ENCODE measurements at regions of chr4 and their contacts with region 1.

Region 1: GRCh38 chr4:108053251-108053711 is 63.6 kb downstream of the HADH start:
- DNase-seq: no peak
- H3K4me3 ChIP-seq: no peak overlapping the region
- H3K4me3 Mint-ChIP-seq: peak overlapping the region in 2 of 8 donors; percentile 0 to 55
- H3K27ac ChIP-seq: no peak overlapping the region
- H3K27ac Mint-ChIP-seq: peak overlapping the region; percentile 64 to 95 (median 75)
- H3K4me1 ChIP-seq: peaks cover 75% of the 10 kb centered on the region
- H3K4me1 Mint-ChIP-seq: peaks cover 40 to 76% (median 64%) of the 10 kb centered on the region in 4 donors
- H3K27me3 ChIP-seq: no peaks in the 10 kb centered on the region
- H3K27me3 Mint-ChIP-seq: no peaks in the 10 kb centered on the region

Region 2: DNA sequence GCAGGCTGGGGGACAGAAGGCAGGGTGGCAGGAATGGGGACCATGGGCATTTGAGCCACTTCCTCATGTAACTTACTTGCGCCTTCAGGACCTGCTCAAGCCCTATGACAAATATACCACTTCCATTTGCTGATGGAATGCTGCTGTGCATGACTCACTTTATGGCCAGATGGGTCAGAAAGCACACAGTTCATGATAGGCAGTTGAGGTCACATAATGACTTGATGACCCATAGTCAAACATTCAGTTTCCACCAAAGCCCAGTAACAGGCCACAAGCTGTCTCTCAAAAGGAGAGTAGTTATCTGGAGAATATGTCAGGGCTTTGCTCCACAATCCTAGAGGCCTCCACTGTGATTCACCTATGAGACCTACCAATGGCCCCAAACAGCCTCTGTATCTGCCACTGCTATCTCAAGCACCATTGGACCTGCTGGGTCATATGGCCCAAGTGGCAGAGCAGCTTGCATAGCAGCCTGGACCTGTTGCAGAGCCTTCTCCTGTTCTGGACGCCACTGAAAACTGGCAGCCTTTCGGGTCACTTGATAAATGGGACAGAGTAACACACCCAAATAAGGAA is 327.9 kb before region 1 on chr4:
- CTCF ChIA-PET with region 1: no interaction called
- POLR2A ChIA-PET with region 1: no interaction called
- intact Hi-C with region 1: no loop called
- DNase-seq: no peak
- H3K4me3 ChIP-seq: no peak overlapping the region
- H3K4me3 Mint-ChIP-seq: no peak overlapping the region
- H3K27ac ChIP-seq: no peak overlapping the region
- H3K27ac Mint-ChIP-seq: no peak overlapping the region
- H3K4me1 ChIP-seq: peaks cover 10% of the 10 kb centered on the region
- H3K4me1 Mint-ChIP-seq: peaks cover 5 to 16% (median 9%) of the 10 kb centered on the region in 4 donors
- H3K27me3 ChIP-seq: no peaks in the 10 kb centered on the region
- H3K27me3 Mint-ChIP-seq: peaks cover 3 to 10% of the 10 kb centered on the region in 2 donors

Region 3: GRCh38 chr4:108036213-108036612 is 17.1 kb before region 1 on chr4:
- CTCF ChIA-PET with region 1: interaction called, 3 read pairs
- POLR2A ChIA-PET with region 1: interaction called, 3 read pairs
- intact Hi-C with region 1: loop called (anchors 2 kb)
- DNase-seq: peak; percentile 45 to 74 (median 60)
- H3K4me3 ChIP-seq: no peak overlapping the region
- H3K4me3 Mint-ChIP-seq: peak overlapping the region in 7 of 8 donors; percentile 21 to 75 (median 60)
- H3K27ac ChIP-seq: peak overlapping the region; percentile 0
- H3K27ac Mint-ChIP-seq: peak overlapping the region; percentile 59 to 93 (median 88)
- H3K4me1 ChIP-seq: peaks cover 13% of the 10 kb centered on the region
- H3K4me1 Mint-ChIP-seq: peaks cover 8 to 23% (median 13%) of the 10 kb centered on the region in 4 donors
- H3K27me3 ChIP-seq: no peaks in the 10 kb centered on the region
- H3K27me3 Mint-ChIP-seq: no peaks in the 10 kb centered on the region

Region 4: DNA sequence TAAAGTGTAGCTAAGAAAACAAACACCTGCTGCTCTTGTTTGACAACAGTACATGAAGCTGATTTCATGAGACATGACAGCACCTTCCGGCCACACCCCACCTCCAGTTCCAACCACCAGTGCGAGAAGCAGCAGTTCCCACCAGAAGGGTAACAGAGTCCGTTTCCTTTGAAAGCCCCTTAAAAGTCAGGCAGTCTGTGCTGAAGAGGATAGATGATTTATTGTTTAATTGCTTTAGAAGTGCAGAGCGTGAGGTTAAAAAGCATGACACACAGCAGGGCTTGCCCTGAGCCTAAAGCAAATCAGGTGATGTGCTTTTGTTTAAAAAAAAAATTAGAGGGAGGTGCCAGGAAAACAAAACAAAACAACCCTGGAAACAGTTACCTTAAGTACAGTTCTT is 19.0 kb after region 1 on chr4:
- CTCF ChIA-PET with region 1: interaction called, 9 read pairs
- POLR2A ChIA-PET with region 1: interaction called, 3 read pairs
- intact Hi-C with region 1: loop called (anchors 2 kb)
- DNase-seq: peak; percentile 58 to 87 (median 69)
- H3K4me3 ChIP-seq: no peak overlapping the region
- H3K4me3 Mint-ChIP-seq: peak overlapping the region in 7 of 8 donors; percentile 57 to 83 (median 78)
- H3K27ac ChIP-seq: peak overlapping the region; percentile 53
- H3K27ac Mint-ChIP-seq: peak overlapping the region; percentile 79 to 95 (median 94)
- H3K4me1 ChIP-seq: peaks cover 58% of the 10 kb centered on the region
- H3K4me1 Mint-ChIP-seq: peaks cover 36 to 74% (median 59%) of the 10 kb centered on the region in 4 donors
- H3K27me3 ChIP-seq: no peaks in the 10 kb centered on the region
- H3K27me3 Mint-ChIP-seq: no peaks in the 10 kb centered on the region

Region 5: DNA sequence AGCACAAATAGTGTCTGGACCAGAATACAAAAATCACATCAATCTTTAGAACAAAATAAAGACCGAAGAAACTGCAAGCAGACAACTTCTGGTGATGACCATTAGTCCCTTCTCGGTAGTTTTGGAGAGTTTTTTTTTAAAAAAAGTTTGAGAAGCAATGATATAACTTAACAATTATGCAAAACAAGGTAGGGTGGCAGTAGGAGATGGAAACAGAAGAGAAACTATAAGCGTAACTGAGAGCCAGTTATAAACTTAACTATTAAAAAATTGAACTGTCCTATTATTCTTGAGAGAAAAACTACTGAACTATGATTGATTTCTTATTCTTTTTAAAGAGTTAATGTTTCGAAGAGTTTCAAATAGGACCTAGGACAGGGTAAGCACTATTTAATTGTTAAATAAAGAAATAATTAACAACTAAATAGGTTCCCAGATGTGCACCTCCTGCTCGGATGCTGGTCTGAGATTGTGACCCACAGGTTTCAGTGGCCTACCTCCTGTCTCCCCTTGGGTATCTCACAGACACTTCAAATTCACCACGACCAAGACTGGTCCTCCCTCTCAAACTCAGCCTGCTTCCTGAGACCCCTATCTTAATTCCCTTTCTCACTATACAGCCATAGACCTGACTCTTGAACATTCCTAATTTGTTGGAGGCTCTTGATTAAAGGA is 34.1 kb after region 1 on chr4:
- CTCF ChIA-PET with region 1: no interaction called
- POLR2A ChIA-PET with region 1: no interaction called
- intact Hi-C with region 1: no loop called
- DNase-seq: no peak
- H3K4me3 ChIP-seq: no peak overlapping the region
- H3K4me3 Mint-ChIP-seq: no peak overlapping the region
- H3K27ac ChIP-seq: no peak overlapping the region
- H3K27ac Mint-ChIP-seq: peak overlapping the region; percentile 22 to 64 (median 27)
- H3K4me1 ChIP-seq: peaks cover 35% of the 10 kb centered on the region
- H3K4me1 Mint-ChIP-seq: peaks cover 20 to 57% (median 41%) of the 10 kb centered on the region in 4 donors
- H3K27me3 ChIP-seq: no peaks in the 10 kb centered on the region
- H3K27me3 Mint-ChIP-seq: no peaks in the 10 kb centered on the region

Measured in CD4-positive, alpha-beta memory T cell (primary cell).